SK-N-SH (cell line): ENCODE measurements at regions of chr7 and their contacts with region 1.

Region 1: GRCh38 chr7:73606801-73607691 is 17.3 kb downstream of the MLXIPL start:
- DNase-seq: peak; percentile 98
- H3K4me3 ChIP-seq: peak overlapping the region; percentile 13 to 57; a peak in 2 of 4 replicates
- H3K27ac ChIP-seq: no peak overlapping the region
- H3K4me1 ChIP-seq: no peaks in the 10 kb centered on the region; a peak in 1 of 4 replicates
- H3K27me3 ChIP-seq: peaks cover 13% of the 10 kb centered on the region
- CTCF ChIP-seq: peak; percentile 100
- EP300 ChIP-seq: no peak
- RAD21 ChIP-seq: peak; percentile 91

Region 2: DNA sequence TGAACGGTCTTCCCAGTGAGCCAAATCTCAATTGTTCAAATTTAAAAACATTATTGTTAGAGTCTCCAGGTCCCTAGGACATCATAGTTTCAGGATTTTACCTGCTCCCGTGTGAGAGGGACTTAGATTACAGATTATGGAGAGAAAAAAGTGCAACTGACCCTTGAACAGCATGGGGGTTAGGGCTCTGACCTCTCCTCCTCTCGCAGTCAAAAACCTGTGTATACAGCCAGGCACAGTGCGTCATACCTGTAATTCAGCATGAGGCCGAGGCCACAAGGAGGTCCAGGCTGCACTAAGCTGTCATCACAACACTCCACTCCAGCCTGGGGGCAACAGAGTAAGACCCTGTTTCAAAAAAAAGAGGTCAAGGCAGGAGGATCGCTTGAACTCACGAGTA is 110.4 kb before region 1 on chr7:
- CTCF ChIA-PET with region 1: no interaction called
- POLR2A ChIA-PET with region 1: no interaction called
- DNase-seq: no peak
- H3K4me3 ChIP-seq: no peak overlapping the region
- H3K27ac ChIP-seq: no peak overlapping the region
- H3K4me1 ChIP-seq: no peaks in the 10 kb centered on the region
- H3K27me3 ChIP-seq: no peaks in the 10 kb centered on the region
- CTCF ChIP-seq: no peak
- EP300 ChIP-seq: no peak
- RAD21 ChIP-seq: no peak

Region 3: DNA sequence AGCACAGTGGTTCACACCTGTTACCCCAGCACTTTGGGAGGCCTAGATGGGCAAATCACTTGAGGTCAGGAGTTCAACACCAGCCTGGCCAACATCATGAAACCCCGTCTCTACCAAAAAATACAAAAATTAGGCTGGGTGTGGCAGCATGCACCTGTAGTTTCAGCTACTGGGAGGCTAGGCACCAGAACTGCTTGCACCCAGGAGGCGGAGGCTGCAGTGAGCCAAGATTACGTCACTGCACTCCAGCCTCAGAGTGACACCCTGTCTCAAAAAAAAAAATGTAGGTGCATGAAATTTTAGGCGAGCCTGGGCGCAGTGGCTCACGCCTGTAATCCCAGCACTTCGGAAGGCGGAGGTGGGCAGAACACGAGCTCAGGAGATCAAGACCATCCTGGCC is 59.2 kb before region 1 on chr7:
- CTCF ChIA-PET with region 1: no interaction called
- POLR2A ChIA-PET with region 1: no interaction called
- DNase-seq: no peak
- H3K4me3 ChIP-seq: no peak overlapping the region
- H3K27ac ChIP-seq: no peak overlapping the region
- H3K4me1 ChIP-seq: no peaks in the 10 kb centered on the region
- H3K27me3 ChIP-seq: no peaks in the 10 kb centered on the region
- CTCF ChIP-seq: no peak
- EP300 ChIP-seq: no peak
- RAD21 ChIP-seq: no peak

Region 4: DNA sequence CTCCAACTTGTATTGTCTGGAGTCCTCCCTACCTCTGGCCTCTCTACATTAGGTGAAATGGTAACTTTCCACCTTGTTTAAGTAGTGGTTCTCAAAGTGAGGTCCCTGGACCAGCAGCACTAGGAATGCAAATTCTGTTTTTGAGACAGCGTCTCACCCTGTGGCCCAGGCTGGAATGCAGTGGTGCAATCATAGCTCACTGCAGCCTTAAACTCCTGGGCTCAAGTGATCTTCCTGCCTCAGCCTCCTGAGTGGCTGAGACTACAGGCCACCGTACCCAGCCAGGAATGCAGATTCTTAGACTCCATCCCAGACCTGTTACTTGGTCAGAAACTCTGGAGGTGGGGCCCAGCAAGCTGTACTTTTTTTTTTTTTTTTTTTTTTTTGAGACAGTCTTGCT is 21.9 kb before region 1 on chr7:
- CTCF ChIA-PET with region 1: interaction called, 36 read pairs
- POLR2A ChIA-PET with region 1: no interaction called
- DNase-seq: no peak
- H3K4me3 ChIP-seq: no peak overlapping the region
- H3K27ac ChIP-seq: no peak overlapping the region
- H3K4me1 ChIP-seq: no peaks in the 10 kb centered on the region
- H3K27me3 ChIP-seq: no peaks in the 10 kb centered on the region
- CTCF ChIP-seq: no peak
- EP300 ChIP-seq: no peak
- RAD21 ChIP-seq: no peak

Region 5: DNA sequence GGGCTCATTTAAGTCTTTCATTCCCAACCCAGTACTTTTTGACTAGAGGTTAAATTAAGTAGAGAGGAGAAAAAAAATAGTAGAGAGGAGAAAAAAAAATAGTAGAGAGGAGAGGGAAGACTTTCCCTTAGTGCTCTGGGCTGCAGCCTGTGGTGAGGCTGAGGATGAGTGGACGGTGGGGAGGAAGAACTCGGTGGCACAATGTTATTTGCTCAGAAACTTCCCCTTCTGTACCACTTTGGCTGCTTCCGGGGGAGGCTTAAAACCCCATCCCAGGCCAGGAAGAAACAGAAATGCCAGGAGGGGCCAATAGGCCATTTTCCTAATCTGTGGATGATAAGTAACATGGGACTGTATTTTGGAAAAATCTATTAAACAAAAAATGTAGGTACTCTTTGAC is 31.9 kb after region 1 on chr7:
- CTCF ChIA-PET with region 1: interaction called, 55 read pairs
- POLR2A ChIA-PET with region 1: no interaction called
- DNase-seq: no peak
- H3K4me3 ChIP-seq: no peak overlapping the region
- H3K27ac ChIP-seq: no peak overlapping the region
- H3K4me1 ChIP-seq: peaks cover 0 to 8% of the 10 kb centered on the region in 2 experiments; a peak in 1 of 4 replicates
- H3K27me3 ChIP-seq: peaks cover 23% of the 10 kb centered on the region; the same call in 1 of the 2 replicates
- CTCF ChIP-seq: no peak
- EP300 ChIP-seq: no peak
- RAD21 ChIP-seq: no peak

Region 6: DNA sequence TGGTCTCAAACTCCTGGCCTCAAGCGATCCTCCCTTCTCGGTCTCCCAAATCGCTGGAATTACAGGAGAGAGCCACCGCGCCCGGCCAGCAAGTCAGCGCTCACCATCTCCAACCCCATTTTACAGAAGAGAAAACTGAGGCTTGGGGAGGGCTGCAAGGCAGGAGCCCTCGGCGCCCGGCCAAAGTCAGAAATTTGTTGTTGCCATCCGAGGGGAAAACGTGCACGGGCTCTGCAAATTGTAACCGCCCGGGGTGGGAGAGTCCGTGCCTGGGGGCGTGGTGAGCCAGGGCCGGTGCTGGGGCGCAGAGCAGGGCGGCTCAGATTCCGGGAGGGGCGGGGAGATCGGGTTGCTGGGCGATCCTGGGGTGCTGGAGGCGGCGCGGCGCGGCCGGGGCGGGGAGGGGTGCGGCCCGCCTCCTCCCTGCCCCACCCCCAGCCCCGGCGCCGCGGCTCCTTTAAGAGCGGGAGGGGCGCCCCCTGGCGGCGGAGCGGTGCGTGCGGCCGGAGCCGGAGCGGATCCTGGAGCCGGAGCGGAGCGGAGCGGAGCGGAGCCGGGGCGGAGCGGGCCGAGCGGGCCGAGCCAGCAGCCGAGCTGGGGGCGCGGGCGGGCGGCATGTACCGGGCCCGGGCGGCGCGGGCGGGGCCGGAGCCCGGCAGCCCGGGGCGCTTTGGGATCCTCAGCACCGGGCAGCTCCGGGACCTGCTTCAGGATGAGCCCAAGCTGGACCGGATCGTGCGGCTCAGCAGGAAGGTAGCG is 60.5 kb after region 1 on chr7 and contains the start of gene VPS37D:
- CTCF ChIA-PET with region 1: interaction called, 125 read pairs
- POLR2A ChIA-PET with region 1: interaction called, 3 read pairs
- DNase-seq: peak; percentile 100
- H3K4me3 ChIP-seq: peak within 1 kb of the TSS; percentile 70 to 75
- H3K27ac ChIP-seq: peak within 1 kb of the TSS in 1 of 2 experiments; percentile 22; a peak in 1 of 4 replicates
- H3K4me1 ChIP-seq: peaks cover 0 to 8% of the 10 kb centered on the region in 2 experiments; a peak in 1 of 4 replicates
- H3K27me3 ChIP-seq: 0 out of 2 replicates have a peak, but pooled peaks cover 6% of the 10 kb centered on the region
- CTCF ChIP-seq: peak; percentile 70
- EP300 ChIP-seq: peak in 1 of 2 experiments; percentile 27; a peak in 2 of 4 replicates
- RAD21 ChIP-seq: peak; percentile 64
- polyA plus RNA-seq, gene VPS37D: 5.7 and 7.4 TPM in 2 replicates

Region 7: DNA sequence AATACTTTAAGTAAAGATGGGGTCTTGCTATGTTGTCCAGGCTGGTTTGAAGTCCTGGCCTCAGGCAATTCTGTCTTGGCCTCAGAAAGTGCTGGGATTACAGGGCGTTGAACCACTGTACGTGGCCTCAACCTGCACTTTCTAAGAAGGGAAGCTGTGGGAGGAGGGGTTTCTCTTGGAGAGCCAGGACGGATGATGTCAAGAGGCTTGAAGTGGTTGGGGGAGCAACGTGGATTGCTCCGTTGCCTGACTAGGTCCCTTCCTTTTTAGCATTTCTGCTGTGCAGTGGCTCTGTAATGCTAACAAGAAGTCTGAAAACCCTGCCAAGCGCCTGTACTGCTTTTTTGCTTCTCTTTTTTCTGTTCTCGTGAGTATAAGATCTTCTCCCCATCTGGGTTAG is 83.6 kb after region 1 on chr7:
- CTCF ChIA-PET with region 1: interaction called, 70 read pairs
- POLR2A ChIA-PET with region 1: no interaction called
- DNase-seq: no peak
- H3K4me3 ChIP-seq: no peak overlapping the region
- H3K27ac ChIP-seq: no peak overlapping the region
- H3K4me1 ChIP-seq: no peaks in the 10 kb centered on the region
- H3K27me3 ChIP-seq: no peaks in the 10 kb centered on the region
- CTCF ChIP-seq: no peak
- EP300 ChIP-seq: no peak
- RAD21 ChIP-seq: no peak

Region 8: DNA sequence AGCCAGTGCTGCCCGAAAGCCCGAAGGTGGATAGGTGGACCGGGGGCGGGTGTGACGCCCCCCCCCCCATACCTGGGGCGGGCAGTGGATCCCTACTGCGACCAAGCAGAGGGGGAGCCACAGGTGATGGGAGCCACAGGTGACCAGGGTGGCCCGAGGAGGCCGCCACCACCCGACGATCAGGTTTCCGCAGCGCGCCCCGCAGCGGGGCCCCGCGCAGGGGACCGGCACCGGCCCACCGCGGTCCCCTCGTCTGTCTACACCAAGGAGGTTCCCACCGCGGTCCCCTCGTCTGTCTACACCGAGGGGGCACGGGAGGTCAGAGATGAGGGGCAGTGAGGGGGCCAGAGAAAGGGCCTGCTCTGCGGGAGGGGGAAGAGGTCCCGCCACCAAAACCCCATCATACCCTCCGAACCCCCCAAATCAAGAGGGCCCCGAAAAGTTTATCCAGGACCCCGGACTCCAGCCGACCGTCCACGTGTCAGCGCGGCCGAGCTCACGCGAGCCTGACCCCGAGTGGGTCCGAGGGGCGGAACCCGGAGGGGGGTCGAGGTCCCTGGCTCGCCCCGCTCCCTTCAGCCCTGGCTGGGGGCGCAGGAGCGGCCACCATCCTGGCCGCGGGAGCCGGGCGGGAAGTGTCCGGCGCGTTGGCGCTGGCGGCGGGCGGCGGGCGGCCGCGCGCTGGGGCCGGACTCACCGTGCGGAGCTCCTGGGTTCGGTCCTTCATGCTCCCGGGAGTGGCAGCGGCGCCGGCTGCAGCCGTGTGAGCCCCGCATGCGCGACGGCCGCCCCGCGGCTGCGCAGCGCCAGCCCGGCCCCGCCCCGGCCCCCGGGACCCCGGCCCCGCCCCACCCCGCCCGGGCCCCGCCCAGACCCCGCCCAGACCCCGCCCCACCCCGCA is 112.1 kb after region 1 on chr7 and contains the start of gene STX1A:
- CTCF ChIA-PET with region 1: interaction called, 326 read pairs
- POLR2A ChIA-PET with region 1: no interaction called
- DNase-seq: peak; percentile 100
- H3K4me3 ChIP-seq: peak within 1 kb of the TSS; percentile 75 to 87
- H3K27ac ChIP-seq: peak within 1 kb of the TSS; percentile 12 to 88; a peak in 3 of 4 replicates
- H3K4me1 ChIP-seq: peaks cover 23 to 38% of the 10 kb centered on the region in 2 experiments; a peak in 3 of 4 replicates
- H3K27me3 ChIP-seq: no peaks in the 10 kb centered on the region
- CTCF ChIP-seq: no peak
- EP300 ChIP-seq: no peak
- RAD21 ChIP-seq: no peak
- polyA plus RNA-seq, gene STX1A: 81.2 and 91.1 TPM in 2 replicates

Region 9: GRCh38 chr7:73851410-73852234 is 244.6 kb after region 1 on chr7:
- CTCF ChIA-PET with region 1: interaction called, 38 read pairs
- POLR2A ChIA-PET with region 1: no interaction called
- DNase-seq: no peak
- H3K4me3 ChIP-seq: peak overlapping the region in 1 of 2 experiments; percentile 17; a peak in 2 of 4 replicates
- H3K27ac ChIP-seq: peak overlapping the region; percentile 1 to 100; a peak in 3 of 4 replicates
- H3K4me1 ChIP-seq: peaks cover 2 to 22% of the 10 kb centered on the region in 2 experiments; a peak in 3 of 4 replicates
- H3K27me3 ChIP-seq: no peaks in the 10 kb centered on the region
- CTCF ChIP-seq: no peak
- EP300 ChIP-seq: peak; percentile 27 to 97; a peak in 2 of 4 replicates
- RAD21 ChIP-seq: no peak

Region 10: GRCh38 chr7:74544706-74545469 is 937.8 kb after region 1 on chr7:
- CTCF ChIA-PET with region 1: no interaction called
- POLR2A ChIA-PET with region 1: no interaction called
- DNase-seq: peak; percentile 77
- H3K4me3 ChIP-seq: no peak overlapping the region
- H3K27ac ChIP-seq: no peak overlapping the region
- H3K4me1 ChIP-seq: peaks cover 0 to 2% of the 10 kb centered on the region in 2 experiments; a peak in 1 of 4 replicates
- H3K27me3 ChIP-seq: no peaks in the 10 kb centered on the region
- CTCF ChIP-seq: peak; percentile 62
- EP300 ChIP-seq: no peak
- RAD21 ChIP-seq: peak; percentile 72